ENCODE measurements at regions of chr5 and their contacts with region 1.

Region 1: GRCh38 chr5:28344803-28345433 is 1306.5 kb upstream of the CDH9 start:
- DNase-seq: peak; percentile 73
- H3K4me3 ChIP-seq: no peak overlapping the region
- H3K27ac ChIP-seq: no peak overlapping the region
- H3K4me1 ChIP-seq: no peaks in the 10 kb centered on the region
- H3K27me3 ChIP-seq: no peaks in the 10 kb centered on the region
- CTCF ChIP-seq: peak; percentile 74

Region 2: DNA sequence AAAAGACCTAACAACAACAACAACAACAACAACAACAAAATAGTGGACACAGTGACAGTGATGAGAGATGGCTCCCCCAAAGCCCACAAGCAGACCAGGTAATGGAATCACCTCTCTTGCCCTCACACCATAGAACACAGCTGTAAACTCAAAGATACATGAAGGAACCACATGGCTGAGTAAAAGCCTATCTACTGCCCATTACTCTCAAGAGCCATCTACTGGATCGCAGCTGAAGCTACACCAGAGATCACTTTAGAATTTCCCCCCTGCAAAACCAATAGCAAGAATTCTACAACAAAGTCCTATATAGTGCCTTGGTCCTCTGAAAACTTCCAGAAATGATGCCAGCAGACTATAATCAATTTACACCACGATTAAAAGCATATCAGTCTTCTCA is 231.1 kb after region 1 on chr5:
- CTCF ChIA-PET with region 1: interaction called, 6 read pairs
- POLR2A ChIA-PET with region 1: no interaction called
- intact Hi-C with region 1: loop called (anchors 1 kb)
- DNase-seq: peak; percentile 27
- H3K4me3 ChIP-seq: no peak overlapping the region
- H3K27ac ChIP-seq: no peak overlapping the region
- H3K4me1 ChIP-seq: no peaks in the 10 kb centered on the region
- H3K27me3 ChIP-seq: no peaks in the 10 kb centered on the region
- CTCF ChIP-seq: peak; percentile 51

Region 3: GRCh38 chr5:28766565-28767158 is 421.7 kb after region 1 on chr5:
- CTCF ChIA-PET with region 1: interaction called, 3 read pairs
- POLR2A ChIA-PET with region 1: no interaction called
- intact Hi-C with region 1: loop called (anchors 2 kb)
- DNase-seq: peak; percentile 63
- H3K4me3 ChIP-seq: no peak overlapping the region
- H3K27ac ChIP-seq: no peak overlapping the region
- H3K4me1 ChIP-seq: no peaks in the 10 kb centered on the region
- H3K27me3 ChIP-seq: no peaks in the 10 kb centered on the region
- CTCF ChIP-seq: peak; percentile 55

Region 4: DNA sequence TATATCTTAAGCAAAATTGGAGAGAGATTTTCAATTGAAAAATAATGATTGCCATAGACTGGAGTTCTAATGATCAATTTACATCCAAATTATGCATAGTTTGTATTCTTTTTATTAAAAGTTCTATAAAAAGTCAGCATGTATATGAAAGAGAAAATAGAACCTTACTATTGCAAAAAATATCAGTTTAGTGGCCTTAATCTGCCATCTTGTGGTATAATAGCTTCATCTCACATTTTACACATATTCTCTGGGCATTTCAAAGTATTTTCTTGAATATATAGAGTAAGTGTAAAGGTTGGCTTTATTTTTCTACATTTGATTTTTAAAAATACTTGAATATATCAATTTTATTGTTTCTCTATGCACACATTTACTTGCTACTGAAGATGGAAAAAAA is 552.0 kb after region 1 on chr5:
- CTCF ChIA-PET with region 1: interaction called, 5 read pairs
- POLR2A ChIA-PET with region 1: no interaction called
- intact Hi-C with region 1: loop called (anchors 5 kb)
- DNase-seq: peak; percentile 18
- H3K4me3 ChIP-seq: no peak overlapping the region
- H3K27ac ChIP-seq: no peak overlapping the region
- H3K4me1 ChIP-seq: no peaks in the 10 kb centered on the region
- H3K27me3 ChIP-seq: no peaks in the 10 kb centered on the region
- CTCF ChIP-seq: peak; percentile 43; the same call in 1 of the 2 replicates